ENCODE measurements at regions of chr13 and their contacts with region 1.

Region 1: DNA sequence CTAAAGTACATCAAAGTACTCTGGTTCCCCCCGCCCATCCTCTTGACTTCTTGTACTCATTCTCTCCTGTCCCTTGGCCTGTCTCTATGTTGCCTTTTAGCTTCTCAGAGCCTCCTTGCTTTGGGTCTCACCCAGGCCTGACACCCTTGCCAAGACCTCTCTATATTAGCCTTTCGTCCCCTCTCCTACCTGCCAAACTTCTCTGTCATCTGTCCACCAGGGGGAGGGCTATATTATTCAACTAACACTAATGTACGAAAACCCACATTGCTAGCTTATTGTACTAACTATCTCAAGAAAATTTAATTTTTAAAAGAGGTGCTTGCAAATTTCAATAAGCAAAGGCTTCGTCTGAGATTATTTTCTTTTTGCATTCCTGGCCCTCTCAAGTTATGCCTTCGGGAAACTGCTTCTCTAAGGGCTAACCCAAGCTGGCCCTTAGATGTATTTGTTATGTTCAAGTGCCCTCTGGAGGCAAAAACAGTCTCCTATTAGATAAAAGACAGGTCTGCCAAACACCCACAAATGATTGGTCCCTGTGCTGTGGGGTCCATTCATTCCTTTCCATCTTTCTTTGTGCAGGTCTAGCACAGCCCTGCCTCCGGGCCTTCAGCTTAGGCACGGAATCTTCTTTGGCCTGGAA is 6.3 kb upstream of the MRPS31 start:
- DNase-seq: peak; percentile 58
- H3K4me3 Mint-ChIP-seq: peak overlapping the region; percentile 64
- H3K27ac Mint-ChIP-seq: peak overlapping the region; percentile 96
- H3K4me1 Mint-ChIP-seq: peaks cover 30% of the 10 kb centered on the region
- H3K27me3 Mint-ChIP-seq: no peaks in the 10 kb centered on the region

Region 2: GRCh38 chr13:39684531-39685137 is 1092.7 kb before region 1 on chr13:
- CTCF ChIA-PET with region 1: interaction called, 13 read pairs
- POLR2A ChIA-PET with region 1: no interaction called
- intact Hi-C with region 1: loop called (anchors 2 kb)
- DNase-seq: no peak
- H3K4me3 Mint-ChIP-seq: no peak overlapping the region
- H3K27ac Mint-ChIP-seq: no peak overlapping the region
- H3K4me1 Mint-ChIP-seq: peaks cover 20% of the 10 kb centered on the region
- H3K27me3 Mint-ChIP-seq: no peaks in the 10 kb centered on the region

Region 3: GRCh38 chr13:40388617-40389016 is 388.7 kb before region 1 on chr13:
- CTCF ChIA-PET with region 1: no interaction called
- POLR2A ChIA-PET with region 1: no interaction called
- intact Hi-C with region 1: loop called (anchors 5 kb)
- DNase-seq: peak; percentile 92
- H3K4me3 Mint-ChIP-seq: peak overlapping the region; percentile 68
- H3K27ac Mint-ChIP-seq: peak overlapping the region; percentile 94
- H3K4me1 Mint-ChIP-seq: peaks cover 29% of the 10 kb centered on the region
- H3K27me3 Mint-ChIP-seq: no peaks in the 10 kb centered on the region

Region 4: DNA sequence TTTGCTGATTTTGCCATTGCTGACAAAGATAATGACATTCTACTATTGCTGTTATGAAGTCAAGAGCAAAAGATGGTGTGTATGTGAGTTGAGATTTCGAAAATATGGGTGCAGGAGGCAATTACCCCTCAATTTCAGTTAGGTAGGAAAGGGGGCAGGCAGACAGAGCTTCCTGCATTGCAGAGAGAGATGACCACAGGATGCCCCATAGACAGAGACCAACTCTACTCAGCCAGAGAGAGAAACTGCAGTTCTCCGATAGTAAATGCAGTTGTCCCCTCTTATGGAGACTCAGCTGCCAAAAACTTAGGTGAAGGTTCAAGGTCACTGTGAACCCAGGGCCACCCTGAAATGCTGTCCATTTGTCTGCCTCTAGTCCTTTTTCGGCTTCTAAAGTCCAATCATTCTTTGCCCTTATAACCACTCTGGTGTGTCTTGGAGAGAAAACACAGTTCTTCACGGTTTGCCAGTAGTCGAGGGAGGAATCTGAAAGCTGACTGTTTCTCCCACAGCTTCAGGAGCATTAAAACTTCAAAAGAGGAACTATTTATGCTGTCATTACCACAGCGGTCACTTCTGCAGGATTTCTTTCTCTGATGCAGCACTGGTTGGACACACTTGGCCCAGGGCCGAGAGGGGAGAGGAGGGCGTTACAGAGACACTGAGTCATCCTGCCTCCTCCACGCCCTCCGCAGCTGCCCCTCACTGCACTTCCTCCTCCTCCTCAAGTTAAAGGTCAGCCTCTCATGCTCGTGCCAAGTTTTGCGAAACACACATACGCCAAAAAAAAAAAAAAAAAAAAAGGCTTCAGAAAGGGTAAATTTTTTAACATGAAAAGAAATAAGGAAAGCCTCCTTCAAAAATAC is 375.1 kb before region 1 on chr13:
- CTCF ChIA-PET with region 1: no interaction called
- POLR2A ChIA-PET with region 1: no interaction called
- intact Hi-C with region 1: no loop called
- DNase-seq: peak; percentile 55
- H3K4me3 Mint-ChIP-seq: no peak overlapping the region
- H3K27ac Mint-ChIP-seq: no peak overlapping the region
- H3K4me1 Mint-ChIP-seq: peaks cover 9% of the 10 kb centered on the region
- H3K27me3 Mint-ChIP-seq: no peaks in the 10 kb centered on the region

Region 5: GRCh38 chr13:40732658-40733057 is 44.6 kb before region 1 on chr13:
- CTCF ChIA-PET with region 1: no interaction called
- POLR2A ChIA-PET with region 1: no interaction called
- intact Hi-C with region 1: no loop called
- DNase-seq: no peak
- H3K4me3 Mint-ChIP-seq: no peak overlapping the region
- H3K27ac Mint-ChIP-seq: no peak overlapping the region
- H3K4me1 Mint-ChIP-seq: peaks cover 8% of the 10 kb centered on the region
- H3K27me3 Mint-ChIP-seq: no peaks in the 10 kb centered on the region

Region 6: DNA sequence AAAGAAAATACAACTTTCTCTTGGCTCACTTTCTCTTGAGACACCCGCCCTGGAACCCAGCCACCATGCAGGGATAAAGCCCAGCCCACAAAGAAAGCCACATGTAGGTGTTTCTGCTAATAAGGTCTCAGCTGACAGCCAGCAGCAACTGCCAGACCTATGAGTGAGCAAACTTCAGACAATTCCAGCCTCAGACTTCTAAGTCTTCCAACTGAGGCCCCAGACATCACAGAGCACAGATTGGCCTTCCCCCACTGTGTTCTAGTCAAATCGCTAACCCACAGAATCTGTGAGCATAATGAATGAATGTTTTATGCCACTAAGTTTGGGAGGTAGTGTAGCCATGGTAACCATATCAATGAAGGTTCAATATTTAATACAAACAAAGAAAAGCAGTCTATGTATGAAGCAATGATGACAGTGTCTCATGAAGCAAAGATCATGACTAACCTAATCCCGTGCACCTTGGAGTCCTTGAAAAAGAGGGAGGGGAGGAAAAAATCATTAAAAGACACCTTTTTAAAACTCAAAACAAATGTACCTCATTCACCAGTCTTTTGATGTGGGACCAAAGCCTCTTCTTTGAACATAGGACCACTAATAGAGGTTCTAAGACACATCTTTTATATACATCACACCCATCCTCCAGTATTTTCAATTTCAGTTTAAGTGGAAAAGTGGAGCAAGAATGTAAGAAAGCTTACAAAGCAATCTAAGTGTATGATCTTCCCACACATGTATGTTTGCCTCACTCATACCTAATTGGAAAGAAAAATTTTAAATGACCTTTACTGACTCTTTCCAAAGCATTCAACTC is 12.5 kb before region 1 on chr13:
- CTCF ChIA-PET with region 1: interaction called, 16 read pairs
- POLR2A ChIA-PET with region 1: no interaction called
- intact Hi-C with region 1: no loop called
- DNase-seq: peak; percentile 75
- H3K4me3 Mint-ChIP-seq: peak overlapping the region; percentile 23
- H3K27ac Mint-ChIP-seq: peak overlapping the region; percentile 85
- H3K4me1 Mint-ChIP-seq: peaks cover 47% of the 10 kb centered on the region
- H3K27me3 Mint-ChIP-seq: no peaks in the 10 kb centered on the region

Region 7: GRCh38 chr13:40813661-40814454 is 36.6 kb after region 1 on chr13:
- CTCF ChIA-PET with region 1: interaction called, 6 read pairs
- POLR2A ChIA-PET with region 1: no interaction called
- intact Hi-C with region 1: loop called (anchors 1 kb)
- DNase-seq: no peak
- H3K4me3 Mint-ChIP-seq: no peak overlapping the region
- H3K27ac Mint-ChIP-seq: no peak overlapping the region
- H3K4me1 Mint-ChIP-seq: peaks cover under 1% of the 10 kb centered on the region
- H3K27me3 Mint-ChIP-seq: no peaks in the 10 kb centered on the region

Region 8: GRCh38 chr13:41019011-41019487 is 241.8 kb after region 1 on chr13 and contains the start of gene ELF1:
- CTCF ChIA-PET with region 1: interaction called, 3 read pairs
- POLR2A ChIA-PET with region 1: no interaction called
- intact Hi-C with region 1: loop called (anchors 5 kb)
- DNase-seq: peak; percentile 67
- H3K4me3 Mint-ChIP-seq: peak within 1 kb of the TSS; percentile 92
- H3K27ac Mint-ChIP-seq: peak within 1 kb of the TSS; percentile 98
- H3K4me1 Mint-ChIP-seq: peaks cover 36% of the 10 kb centered on the region
- H3K27me3 Mint-ChIP-seq: no peaks in the 10 kb centered on the region
- total RNA-seq, gene ELF1: 70.8 to 71.2 TPM

Region 9: GRCh38 chr13:41132512-41133152 is 355.3 kb after region 1 on chr13 and contains the start of gene KBTBD6:
- CTCF ChIA-PET with region 1: no interaction called
- POLR2A ChIA-PET with region 1: no interaction called
- intact Hi-C with region 1: loop called (anchors 5 kb)
- DNase-seq: peak; percentile 98
- H3K4me3 Mint-ChIP-seq: peak within 1 kb of the TSS; percentile 92
- H3K27ac Mint-ChIP-seq: peak within 1 kb of the TSS; percentile 86
- H3K4me1 Mint-ChIP-seq: peaks cover 43% of the 10 kb centered on the region
- H3K27me3 Mint-ChIP-seq: no peaks in the 10 kb centered on the region
- total RNA-seq, gene KBTBD6: 3.6 to 4.2 TPM

Measured in activated CD4-positive, alpha-beta memory T cell treated with anti-CD3 and anti-CD28 coated beads for 36 hours (primary cell).